Caco-2 (cell line): ENCODE measurements at regions of chr3 and their contacts with region 1.

Region 1: DNA sequence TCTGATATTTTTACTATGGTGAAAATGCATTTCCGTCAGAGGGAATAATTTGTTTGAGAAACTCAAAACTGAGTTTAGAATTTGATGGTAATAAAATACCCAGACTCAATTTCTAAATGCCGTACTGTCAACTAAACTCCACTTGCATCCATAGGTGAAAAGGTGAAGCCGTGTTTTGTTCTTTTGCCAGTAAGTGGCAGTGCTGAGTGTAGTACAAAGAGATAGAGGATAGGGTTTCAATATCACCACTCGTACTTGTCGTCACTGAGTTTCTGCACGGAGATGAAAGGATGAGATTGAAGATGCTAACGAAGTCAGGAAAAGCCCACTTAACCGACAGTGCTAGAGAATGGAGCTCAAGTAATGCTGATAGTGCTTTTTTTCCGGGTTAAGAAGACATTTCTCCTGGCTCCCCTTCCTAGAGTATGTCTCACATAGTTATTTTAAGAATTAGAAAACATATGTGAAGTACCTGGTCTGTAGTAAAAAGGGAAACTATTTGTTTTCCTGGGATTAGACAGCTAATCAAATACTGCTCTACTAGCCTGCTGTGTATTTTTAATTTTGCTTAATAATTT is 345.1 kb downstream of the IL5RA start:
- DNase-seq: peak in 1 of 2 experiments; percentile 37
- H3K4me3 ChIP-seq: no peak overlapping the region
- H3K4me3 Mint-ChIP-seq: no peak overlapping the region
- H3K27ac Mint-ChIP-seq: no peak overlapping the region
- H3K4me1 ChIP-seq: peaks cover 2% of the 10 kb centered on the region
- H3K4me1 Mint-ChIP-seq: peaks cover 3% of the 10 kb centered on the region
- H3K27me3 ChIP-seq: no peaks in the 10 kb centered on the region
- H3K27me3 Mint-ChIP-seq: no peaks in the 10 kb centered on the region
- CTCF ChIP-seq: peak in 1 of 2 experiments; percentile 65

Region 2: DNA sequence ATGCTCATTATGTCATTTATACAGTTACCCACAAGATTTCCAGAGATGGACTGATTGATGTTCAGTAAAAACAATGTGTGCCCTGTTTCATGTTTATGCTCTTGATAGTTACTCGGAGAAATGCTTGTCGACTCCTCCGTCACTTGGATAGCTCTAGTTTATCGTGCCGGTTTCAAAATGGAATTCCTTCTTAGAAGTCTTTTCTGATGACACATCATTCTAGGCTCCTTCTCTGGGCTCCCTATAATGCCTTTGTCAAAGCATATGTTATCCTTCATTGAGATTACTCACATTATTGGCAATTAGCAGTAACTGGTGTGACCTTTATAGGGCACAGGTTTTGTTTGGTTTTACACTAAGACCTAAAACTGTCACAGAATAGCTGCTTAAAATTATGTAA is 1470.5 kb before region 1 on chr3:
- CTCF ChIA-PET with region 1: no interaction called
- POLR2A ChIA-PET with region 1: no interaction called
- intact Hi-C with region 1: loop called (anchors 5 kb)
- DNase-seq: no peak
- H3K4me3 ChIP-seq: no peak overlapping the region
- H3K4me3 Mint-ChIP-seq: no peak overlapping the region
- H3K27ac Mint-ChIP-seq: no peak overlapping the region
- H3K4me1 ChIP-seq: no peaks in the 10 kb centered on the region
- H3K4me1 Mint-ChIP-seq: no peaks in the 10 kb centered on the region
- H3K27me3 ChIP-seq: no peaks in the 10 kb centered on the region
- H3K27me3 Mint-ChIP-seq: peaks cover 2% of the 10 kb centered on the region
- CTCF ChIP-seq: no peak

Region 3: GRCh38 chr3:2713923-2714322 is 51.2 kb before region 1 on chr3:
- CTCF ChIA-PET with region 1: no interaction called
- POLR2A ChIA-PET with region 1: no interaction called
- intact Hi-C with region 1: no loop called
- DNase-seq: peak in 1 of 2 experiments; percentile 12
- H3K4me3 ChIP-seq: no peak overlapping the region
- H3K4me3 Mint-ChIP-seq: no peak overlapping the region
- H3K27ac Mint-ChIP-seq: no peak overlapping the region
- H3K4me1 ChIP-seq: 0 out of 2 replicates have a peak, but pooled peaks cover 5% of the 10 kb centered on the region
- H3K4me1 Mint-ChIP-seq: peaks cover 7% of the 10 kb centered on the region
- H3K27me3 ChIP-seq: no peaks in the 10 kb centered on the region
- H3K27me3 Mint-ChIP-seq: no peaks in the 10 kb centered on the region
- CTCF ChIP-seq: peak; percentile 8 to 33

Region 4: GRCh38 chr3:2898591-2899353 is 133.7 kb after region 1 on chr3:
- CTCF ChIA-PET with region 1: no interaction called
- POLR2A ChIA-PET with region 1: no interaction called
- intact Hi-C with region 1: loop called (anchors 1 kb)
- DNase-seq: peak in 1 of 2 experiments; percentile 13
- H3K4me3 ChIP-seq: no peak overlapping the region
- H3K4me3 Mint-ChIP-seq: peak overlapping the region; percentile 2
- H3K27ac Mint-ChIP-seq: no peak overlapping the region
- H3K4me1 ChIP-seq: peaks cover 44% of the 10 kb centered on the region
- H3K4me1 Mint-ChIP-seq: peaks cover 25% of the 10 kb centered on the region
- H3K27me3 ChIP-seq: no peaks in the 10 kb centered on the region
- H3K27me3 Mint-ChIP-seq: no peaks in the 10 kb centered on the region
- CTCF ChIP-seq: no peak

Region 5: DNA sequence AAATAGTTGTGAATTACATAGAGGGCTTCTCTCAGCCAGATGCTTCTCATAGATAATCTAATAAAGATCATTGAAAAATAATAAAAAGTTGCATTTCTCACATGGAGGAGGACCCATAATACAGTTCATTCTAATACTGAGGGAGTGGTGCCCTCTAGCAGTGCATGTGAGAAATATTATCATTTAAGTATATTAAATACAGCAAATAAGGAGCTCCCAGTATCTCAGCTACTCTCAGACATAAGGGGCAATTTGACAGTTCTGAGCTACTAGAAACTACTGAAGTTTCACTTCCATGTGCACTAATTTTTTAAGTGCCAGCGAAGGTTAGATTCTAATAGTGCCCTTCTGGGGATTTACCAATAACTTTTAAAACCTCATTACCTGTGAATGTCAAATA is 156.8 kb after region 1 on chr3:
- CTCF ChIA-PET with region 1: interaction called, 15 read pairs
- POLR2A ChIA-PET with region 1: no interaction called
- intact Hi-C with region 1: loop called (anchors 1 kb)
- DNase-seq: peak in 1 of 2 experiments; percentile 24
- H3K4me3 ChIP-seq: no peak overlapping the region
- H3K4me3 Mint-ChIP-seq: no peak overlapping the region
- H3K27ac Mint-ChIP-seq: no peak overlapping the region
- H3K4me1 ChIP-seq: no peaks in the 10 kb centered on the region
- H3K4me1 Mint-ChIP-seq: no peaks in the 10 kb centered on the region
- H3K27me3 ChIP-seq: no peaks in the 10 kb centered on the region
- H3K27me3 Mint-ChIP-seq: no peaks in the 10 kb centered on the region
- CTCF ChIP-seq: peak; percentile 40 to 46

Region 6: DNA sequence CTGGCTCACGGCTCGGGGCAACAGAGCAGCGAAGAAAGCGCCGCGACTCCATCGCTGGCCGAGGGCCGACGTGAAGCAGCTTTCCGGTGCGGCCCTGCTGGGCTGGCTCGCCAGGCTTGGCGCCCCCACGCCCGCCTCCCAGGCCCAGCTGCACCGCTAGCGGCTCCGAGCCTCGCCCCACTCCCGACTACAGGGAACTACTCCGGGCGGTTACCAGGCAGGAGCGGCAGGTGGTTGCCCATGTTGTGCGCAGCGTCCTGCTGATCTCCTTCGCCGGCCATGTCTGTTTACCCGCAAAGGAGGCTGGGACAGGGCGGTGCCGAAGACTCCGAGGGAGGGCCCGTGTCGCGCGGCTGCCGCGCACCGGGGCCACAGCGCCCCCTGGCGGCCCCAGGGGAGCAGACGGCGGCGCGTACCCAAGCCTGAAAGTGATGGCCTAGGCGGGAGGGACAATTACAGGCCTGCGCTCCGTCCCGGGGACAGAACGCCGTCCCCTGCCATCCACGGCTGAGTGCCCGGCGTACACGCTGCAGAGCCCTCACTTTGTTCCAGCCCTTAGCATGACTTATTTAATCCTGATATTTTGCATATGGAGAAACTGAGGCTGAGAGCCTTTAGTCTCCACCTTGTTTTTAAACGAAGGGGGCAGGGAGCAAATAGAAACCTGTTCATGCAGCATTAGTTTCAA is 414.5 kb after region 1 on chr3 and contains the start of gene CRBN:
- CTCF ChIA-PET with region 1: no interaction called
- POLR2A ChIA-PET with region 1: no interaction called
- intact Hi-C with region 1: loop called (anchors 10 kb)
- DNase-seq: peak; percentile 83 to 91
- H3K4me3 ChIP-seq: peak within 1 kb of the TSS; percentile 100
- H3K4me3 Mint-ChIP-seq: peak within 1 kb of the TSS; percentile 83
- H3K27ac Mint-ChIP-seq: peak within 1 kb of the TSS; percentile 45
- H3K4me1 ChIP-seq: peaks cover 9% of the 10 kb centered on the region
- H3K4me1 Mint-ChIP-seq: peaks cover 13% of the 10 kb centered on the region
- H3K27me3 ChIP-seq: no peaks in the 10 kb centered on the region; the same call in 1 of the 2 replicates
- H3K27me3 Mint-ChIP-seq: peaks cover 4% of the 10 kb centered on the region
- CTCF ChIP-seq: peak; percentile 86 to 90
- total RNA-seq, gene CRBN: 38.0 and 42.1 TPM in 2 replicates